Activated CD4-positive, alpha-beta T cell treated with anti-CD3 and anti-CD28 coated beads, Interleukin-2, amount 10 ng/mL, durations not matched to agents 24 days and 14 days (primary cell): ENCODE measurements at regions of chr11 and their contacts with region 1.

Region 1: GRCh38 chr11:96293598-96294021 is 49.4 kb downstream of the MAML2 start:
- DNase-seq: peak; percentile 65
- H3K4me3 Mint-ChIP-seq: peak overlapping the region; percentile 10
- H3K27ac Mint-ChIP-seq: peak overlapping the region; percentile 23
- H3K4me1 Mint-ChIP-seq: peaks cover 43% of the 10 kb centered on the region
- H3K27me3 Mint-ChIP-seq: no peaks in the 10 kb centered on the region

Region 2: DNA sequence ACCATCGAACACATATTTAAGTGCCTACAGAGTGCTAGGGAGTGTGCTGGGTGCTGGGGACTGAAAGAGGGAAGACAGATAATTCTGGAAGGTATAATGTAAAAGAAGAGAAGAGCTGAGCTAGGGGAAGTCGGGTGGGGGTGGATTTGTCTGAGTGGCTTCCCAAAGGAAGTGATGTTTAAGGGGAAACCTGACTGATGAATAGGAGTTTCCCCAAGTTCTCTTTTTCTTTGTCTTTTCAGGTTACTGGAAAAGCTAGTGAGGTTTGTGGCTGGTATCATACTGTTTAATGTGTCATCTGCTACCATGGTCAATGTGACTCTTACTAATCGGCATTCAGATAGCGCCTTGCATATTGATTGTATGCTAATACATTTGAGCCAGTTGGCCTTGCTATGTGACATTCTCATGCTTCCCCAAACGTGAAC is 218.1 kb before region 1 on chr11:
- intact Hi-C with region 1: loop called (anchors 5 kb)
- DNase-seq: no peak
- H3K4me3 Mint-ChIP-seq: peak overlapping the region; percentile 47
- H3K27ac Mint-ChIP-seq: peak overlapping the region; percentile 58
- H3K4me1 Mint-ChIP-seq: peaks cover 51% of the 10 kb centered on the region
- H3K27me3 Mint-ChIP-seq: no peaks in the 10 kb centered on the region

Region 3: DNA sequence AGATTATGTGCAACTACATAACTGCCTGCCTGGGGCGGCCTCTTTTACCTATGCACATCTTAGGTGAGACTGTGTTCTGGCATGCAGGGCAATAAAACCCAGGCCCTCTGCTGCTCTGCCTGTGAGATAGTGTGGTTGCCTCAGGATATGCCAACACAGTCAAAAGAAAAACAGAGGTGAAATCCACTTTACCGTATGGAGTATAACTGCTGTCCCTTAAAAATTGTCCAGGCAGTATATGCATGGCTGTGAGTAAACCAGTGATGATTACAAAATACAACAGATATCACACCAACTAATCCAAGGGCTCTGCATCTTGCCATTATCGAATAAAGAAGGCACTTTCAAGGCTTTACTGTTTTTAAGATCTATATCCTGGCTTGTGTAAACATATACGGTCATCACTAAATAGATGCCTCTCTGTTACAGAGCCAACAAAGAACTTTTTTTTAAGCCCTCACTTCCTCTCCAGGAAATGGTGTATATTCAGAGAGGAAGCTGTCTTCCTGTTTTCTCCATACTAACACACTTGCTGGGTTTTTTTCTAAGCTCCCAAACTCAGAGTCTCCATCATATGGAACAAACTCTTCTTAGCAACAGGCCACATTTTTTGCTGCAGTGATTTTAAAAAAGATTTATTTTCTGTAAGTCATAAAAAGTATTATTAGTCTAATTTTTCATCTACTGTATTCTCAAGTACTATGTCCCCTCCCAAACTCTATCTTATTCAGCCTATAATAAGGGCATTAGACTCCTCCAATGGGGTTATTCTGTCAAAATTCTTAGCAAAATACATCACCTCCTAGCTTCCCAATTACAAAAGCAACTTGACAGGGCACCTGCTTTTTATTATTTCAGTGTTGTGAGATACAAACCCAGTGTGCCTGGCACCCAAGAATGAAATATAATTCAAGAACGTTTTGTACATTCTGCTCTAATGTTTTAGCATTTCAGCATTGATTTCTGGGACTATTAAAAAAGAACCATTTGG is 85.9 kb before region 1 on chr11:
- intact Hi-C with region 1: loop called (anchors 5 kb)
- DNase-seq: peak; percentile 78
- H3K4me3 Mint-ChIP-seq: peak overlapping the region; percentile 74
- H3K27ac Mint-ChIP-seq: peak overlapping the region; percentile 93
- H3K4me1 Mint-ChIP-seq: peaks cover 71% of the 10 kb centered on the region
- H3K27me3 Mint-ChIP-seq: no peaks in the 10 kb centered on the region

Region 4: DNA sequence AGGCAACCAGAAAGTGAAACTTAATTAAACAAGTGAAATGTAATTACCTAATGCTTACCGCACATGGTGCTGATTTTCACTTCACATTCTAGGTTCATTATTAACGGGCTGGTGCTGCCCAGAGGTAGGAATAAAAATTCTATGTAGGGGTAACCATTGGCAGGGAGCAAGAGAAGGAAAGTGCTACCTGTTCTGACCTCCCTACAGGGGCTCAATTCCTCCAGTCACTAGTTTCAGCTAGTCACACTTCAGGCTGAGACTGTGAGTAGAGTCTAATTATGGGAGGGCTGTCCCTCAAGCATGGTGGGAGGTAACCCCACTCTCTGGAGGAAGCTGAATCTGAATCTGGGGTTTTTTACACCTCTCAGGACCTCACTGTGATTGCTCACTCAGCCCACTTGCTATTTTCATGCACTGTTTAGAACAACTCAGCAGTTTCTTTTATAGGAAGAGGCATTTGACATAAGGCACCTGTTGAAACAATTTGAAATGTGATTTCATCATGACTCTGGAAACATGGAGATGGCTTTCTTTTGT is 26.0 kb before region 1 on chr11:
- intact Hi-C with region 1: loop called (anchors 1 kb)
- DNase-seq: peak; percentile 75
- H3K4me3 Mint-ChIP-seq: peak overlapping the region; percentile 44
- H3K27ac Mint-ChIP-seq: peak overlapping the region; percentile 78
- H3K4me1 Mint-ChIP-seq: peaks cover 57% of the 10 kb centered on the region
- H3K27me3 Mint-ChIP-seq: no peaks in the 10 kb centered on the region

Region 5: GRCh38 chr11:96303980-96304379 is 10.4 kb after region 1 on chr11:
- intact Hi-C with region 1: no loop called
- DNase-seq: no peak
- H3K4me3 Mint-ChIP-seq: no peak overlapping the region
- H3K27ac Mint-ChIP-seq: no peak overlapping the region
- H3K4me1 Mint-ChIP-seq: peaks cover 39% of the 10 kb centered on the region
- H3K27me3 Mint-ChIP-seq: no peaks in the 10 kb centered on the region

Region 6: GRCh38 chr11:96314326-96315020 is 20.9 kb after region 1 on chr11:
- intact Hi-C with region 1: loop called (anchors 2 kb)
- DNase-seq: no peak
- H3K4me3 Mint-ChIP-seq: peak overlapping the region; percentile 33
- H3K27ac Mint-ChIP-seq: peak overlapping the region; percentile 74
- H3K4me1 Mint-ChIP-seq: peaks cover 40% of the 10 kb centered on the region
- H3K27me3 Mint-ChIP-seq: no peaks in the 10 kb centered on the region

Region 7: GRCh38 chr11:96622026-96622634 is 328.5 kb after region 1 on chr11:
- intact Hi-C with region 1: no loop called
- DNase-seq: no peak
- H3K4me3 Mint-ChIP-seq: no peak overlapping the region
- H3K27ac Mint-ChIP-seq: no peak overlapping the region
- H3K4me1 Mint-ChIP-seq: no peaks in the 10 kb centered on the region
- H3K27me3 Mint-ChIP-seq: no peaks in the 10 kb centered on the region